Psoas muscle (tissue), 8 donors: ENCODE measurements at regions of chr16 and their contacts with region 1.

Region 1: GRCh38 chr16:81035398-81035974 is at the start of gene ATMIN:
- DNase-seq: peak; percentile 88 to 92
- ATAC-seq: peak; percentile 99
- H3K4me3 ChIP-seq: peak within 1 kb of the TSS; percentile 92
- H3K27ac ChIP-seq: peak within 1 kb of the TSS; percentile 80
- H3K4me1 ChIP-seq: peaks cover 19% of the 10 kb centered on the region
- H3K27me3 ChIP-seq: no peaks in the 10 kb centered on the region
- CTCF ChIP-seq: peak; percentile 97
- total RNA-seq, gene ATMIN: 26.5 to 33.5 (median 28.4) TPM

Region 2: DNA sequence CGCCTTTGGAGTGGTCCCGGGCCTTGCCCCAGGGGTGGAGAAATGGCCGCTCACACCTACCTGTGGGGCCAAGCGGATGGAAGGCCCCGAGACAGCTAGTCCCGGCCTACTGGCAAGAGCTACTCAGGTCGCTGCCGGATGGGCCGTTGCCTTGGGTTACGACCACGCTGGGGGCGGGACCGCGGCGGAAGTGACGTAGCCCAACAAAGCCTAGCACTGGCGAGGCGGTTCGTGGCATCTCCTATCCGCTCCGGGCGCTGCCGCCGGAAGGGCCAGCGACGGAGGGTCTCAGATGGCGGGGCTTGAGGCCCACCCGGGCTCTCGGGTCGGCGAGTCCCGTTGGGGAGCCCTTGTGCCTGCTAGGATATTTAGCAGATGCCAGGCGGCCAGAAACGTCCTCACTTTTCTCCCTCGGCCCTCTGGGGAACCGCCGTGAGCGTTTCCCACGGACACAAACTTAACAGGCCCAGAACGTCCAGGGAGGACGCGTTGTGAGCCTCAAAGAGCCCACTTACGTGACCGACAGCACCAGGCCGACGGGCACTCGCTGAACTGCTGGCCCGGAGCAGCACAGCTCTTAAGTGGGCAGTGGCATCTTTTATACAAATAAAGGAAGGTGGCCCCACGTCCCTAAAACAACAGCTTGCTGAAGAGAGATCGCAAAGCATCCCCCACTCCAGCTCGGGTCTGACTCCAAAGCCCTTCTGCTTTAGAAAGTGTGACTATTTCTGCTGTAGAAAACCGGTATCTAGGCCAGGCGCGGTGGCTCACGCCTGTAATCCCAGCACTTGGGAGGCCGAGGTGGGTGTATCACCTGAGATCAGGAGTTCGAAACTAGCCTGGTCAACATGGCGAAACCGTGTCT is 41.8 kb after region 1 on chr16 and contains the start of gene C16orf46:
- intact Hi-C with region 1: loop called (anchors 5 kb)
- DNase-seq: peak; percentile 97 to 98
- ATAC-seq: peak; percentile 97 to 99 (median 98)
- H3K4me3 ChIP-seq: peak within 1 kb of the TSS; percentile 75
- H3K27ac ChIP-seq: peak within 1 kb of the TSS; percentile 95
- H3K4me1 ChIP-seq: no peaks in the 10 kb centered on the region
- H3K27me3 ChIP-seq: no peaks in the 10 kb centered on the region
- CTCF ChIP-seq: no peak
- total RNA-seq, gene C16orf46: 0.27 to 0.63 (median 0.46) TPM

Region 3: DNA sequence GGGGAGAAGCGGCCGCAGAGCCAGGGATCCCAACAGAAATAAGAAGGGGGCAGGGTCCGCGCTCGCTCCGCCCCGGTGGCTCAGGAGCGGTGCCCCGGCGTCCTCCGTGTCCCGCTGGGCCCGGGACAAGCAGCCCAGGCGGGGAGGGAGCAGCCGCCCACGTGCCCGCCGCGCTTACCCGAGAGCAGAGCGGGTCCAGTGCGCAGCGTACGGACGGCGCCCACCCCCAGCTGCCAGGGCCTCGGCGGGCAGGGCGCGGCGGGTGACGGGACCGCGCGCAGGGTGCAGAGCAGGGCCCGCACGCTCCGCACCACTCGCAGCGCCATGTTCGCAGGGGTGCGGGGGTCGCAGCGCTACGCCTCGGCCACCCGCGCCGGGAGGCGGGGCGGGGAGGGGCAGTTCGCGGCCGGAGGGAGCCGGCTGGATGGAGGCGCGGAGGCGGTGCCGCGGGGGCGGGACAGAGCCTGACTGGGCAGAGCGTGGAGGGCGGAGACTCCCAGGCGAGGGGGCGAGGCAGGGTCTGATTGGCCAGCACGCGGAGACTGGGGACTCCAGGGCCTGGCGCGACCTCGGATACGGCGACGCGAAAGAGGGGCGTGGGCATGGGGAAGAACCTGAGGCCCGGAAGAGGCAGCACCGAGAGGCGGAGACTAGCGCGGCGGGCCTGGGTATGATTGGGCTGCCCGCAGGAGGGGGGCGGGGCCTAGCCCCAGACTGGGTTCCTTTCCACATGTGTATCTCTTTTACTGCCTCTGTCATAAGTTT is 60.6 kb after region 1 on chr16 and contains the start of gene GCSH:
- intact Hi-C with region 1: loop called in 1 of 2 experiments (anchors 5 kb)
- DNase-seq: peak; percentile 100
- ATAC-seq: peak; percentile 99 to 100 (median 99)
- H3K4me3 ChIP-seq: peak within 1 kb of the TSS; percentile 90
- H3K27ac ChIP-seq: peak within 1 kb of the TSS; percentile 84
- H3K4me1 ChIP-seq: peaks cover 4% of the 10 kb centered on the region
- H3K27me3 ChIP-seq: no peaks in the 10 kb centered on the region
- CTCF ChIP-seq: no peak
- total RNA-seq, gene GCSH: 29.1 to 51.5 (median 39.1) TPM

Region 4: DNA sequence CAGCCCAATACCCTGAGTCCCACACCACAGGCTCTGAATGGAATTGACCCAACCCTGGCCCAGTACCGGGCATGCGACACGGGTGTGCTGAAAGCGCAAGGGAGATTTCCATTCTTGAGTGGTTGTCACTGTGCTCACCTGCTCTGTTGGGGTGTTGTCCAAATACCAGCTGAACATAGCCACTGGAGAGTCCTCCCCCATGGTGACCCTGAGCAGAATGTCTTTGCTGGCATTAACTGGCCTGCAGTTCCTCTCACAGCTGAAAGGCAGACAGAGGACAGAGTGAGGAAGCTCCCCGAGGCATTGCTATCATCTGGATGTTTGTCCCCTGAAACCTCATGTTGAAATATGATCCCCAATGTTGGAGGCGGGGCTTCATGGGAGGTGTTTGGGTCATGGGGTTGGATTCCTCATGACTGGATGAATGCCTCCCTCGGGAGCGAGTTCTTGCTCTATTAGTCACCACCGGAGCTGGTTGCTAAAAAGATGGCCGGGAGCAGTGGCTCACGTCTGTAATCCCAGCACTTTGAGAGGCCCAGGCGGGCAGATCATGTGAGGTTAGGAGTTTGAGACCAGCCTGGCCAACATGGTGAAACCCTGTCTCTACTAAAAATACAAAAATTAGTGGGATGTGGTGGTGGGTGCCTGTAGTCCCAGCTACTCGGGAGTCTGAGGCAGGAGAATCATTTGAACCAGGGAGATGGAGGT is 145.7 kb after region 1 on chr16:
- intact Hi-C with region 1: loop called in 1 of 2 experiments (anchors 10 kb)
- DNase-seq: peak; percentile 86 to 91
- ATAC-seq: peak; percentile 93 to 95 (median 94)
- H3K4me3 ChIP-seq: peak overlapping the region; percentile 6
- H3K27ac ChIP-seq: peak overlapping the region; percentile 80
- H3K4me1 ChIP-seq: peaks cover 6% of the 10 kb centered on the region
- H3K27me3 ChIP-seq: no peaks in the 10 kb centered on the region
- CTCF ChIP-seq: no peak

Region 5: DNA sequence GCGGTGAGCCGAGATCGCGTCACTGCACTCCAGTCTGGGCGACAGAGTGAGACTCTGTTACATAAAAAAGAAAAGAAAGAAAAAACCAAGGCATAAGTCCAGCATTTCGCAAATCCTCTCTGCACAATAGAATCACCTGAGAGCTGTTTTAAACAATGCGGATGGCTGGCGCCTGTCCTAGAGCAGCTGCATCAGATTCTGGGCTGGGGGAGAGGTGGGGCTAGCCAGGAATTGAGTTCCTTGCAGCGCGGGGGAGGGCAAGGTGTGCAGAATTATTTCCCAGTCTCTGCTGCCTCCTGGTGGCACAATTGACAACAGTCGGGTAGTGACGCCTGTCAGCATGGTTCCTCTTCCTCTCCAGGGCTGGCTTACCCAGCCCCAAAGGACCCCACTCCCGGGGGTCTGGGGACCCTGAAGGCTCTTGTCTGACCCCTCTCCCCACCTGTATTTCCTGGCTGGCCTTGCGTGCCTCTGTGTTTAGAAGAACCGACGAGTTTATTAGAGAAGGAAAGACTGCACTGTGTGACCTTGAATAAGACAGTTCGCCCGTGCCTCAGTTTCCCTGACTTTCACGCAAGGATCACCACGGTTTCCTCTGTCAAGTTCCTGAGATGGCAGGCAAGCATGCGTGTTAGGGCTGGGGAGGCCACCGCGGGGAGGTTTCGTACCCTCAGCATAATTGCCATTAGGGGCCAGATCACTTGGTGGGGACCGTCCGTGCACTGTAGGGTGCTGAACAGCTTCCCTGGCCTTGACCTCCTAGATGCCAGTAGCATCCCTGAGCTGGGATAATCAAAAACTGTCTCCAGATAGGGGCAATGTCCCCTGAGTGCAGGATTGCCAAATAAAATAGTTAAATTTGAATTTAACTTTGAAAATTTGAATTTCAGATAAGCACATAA is 702.6 kb after region 1 on chr16:
- intact Hi-C with region 1: loop called in 1 of 2 experiments (anchors 10 kb)
- DNase-seq: peak; percentile 69 to 77
- ATAC-seq: peak; percentile 74 to 89 (median 82)
- H3K4me3 ChIP-seq: no peak overlapping the region
- H3K27ac ChIP-seq: no peak overlapping the region
- H3K4me1 ChIP-seq: no peaks in the 10 kb centered on the region
- H3K27me3 ChIP-seq: no peaks in the 10 kb centered on the region
- CTCF ChIP-seq: peak; percentile 72